OCI-LY7 (cell line): ENCODE measurements at regions of chr11 and their contacts with region 1.

Region 1: GRCh38 chr11:64355078-64355940 is 3.7 kb upstream of the RPS6KA4 start:
- DNase-seq: peak; percentile 86
- H3K4me3 ChIP-seq: no peak overlapping the region
- H3K27ac ChIP-seq: peak overlapping the region; percentile 29
- H3K4me1 ChIP-seq: peaks cover 44% of the 10 kb centered on the region
- CTCF ChIP-seq: peak; percentile 93

Region 2: GRCh38 chr11:64251016-64251752 is 104.1 kb before region 1 on chr11 and contains the start of gene PLCB3:
- CTCF ChIA-PET with region 1: no interaction called
- POLR2A ChIA-PET with region 1: no interaction called
- intact Hi-C with region 1: no loop called
- DNase-seq: peak; percentile 70
- H3K4me3 ChIP-seq: peak within 1 kb of the TSS; percentile 76
- H3K27ac ChIP-seq: no peak within 1 kb of the TSS
- H3K4me1 ChIP-seq: peaks cover 55% of the 10 kb centered on the region
- CTCF ChIP-seq: peak; percentile 80
- total RNA-seq, gene PLCB3: 7.6 and 8.6 TPM in 2 replicates

Region 3: DNA sequence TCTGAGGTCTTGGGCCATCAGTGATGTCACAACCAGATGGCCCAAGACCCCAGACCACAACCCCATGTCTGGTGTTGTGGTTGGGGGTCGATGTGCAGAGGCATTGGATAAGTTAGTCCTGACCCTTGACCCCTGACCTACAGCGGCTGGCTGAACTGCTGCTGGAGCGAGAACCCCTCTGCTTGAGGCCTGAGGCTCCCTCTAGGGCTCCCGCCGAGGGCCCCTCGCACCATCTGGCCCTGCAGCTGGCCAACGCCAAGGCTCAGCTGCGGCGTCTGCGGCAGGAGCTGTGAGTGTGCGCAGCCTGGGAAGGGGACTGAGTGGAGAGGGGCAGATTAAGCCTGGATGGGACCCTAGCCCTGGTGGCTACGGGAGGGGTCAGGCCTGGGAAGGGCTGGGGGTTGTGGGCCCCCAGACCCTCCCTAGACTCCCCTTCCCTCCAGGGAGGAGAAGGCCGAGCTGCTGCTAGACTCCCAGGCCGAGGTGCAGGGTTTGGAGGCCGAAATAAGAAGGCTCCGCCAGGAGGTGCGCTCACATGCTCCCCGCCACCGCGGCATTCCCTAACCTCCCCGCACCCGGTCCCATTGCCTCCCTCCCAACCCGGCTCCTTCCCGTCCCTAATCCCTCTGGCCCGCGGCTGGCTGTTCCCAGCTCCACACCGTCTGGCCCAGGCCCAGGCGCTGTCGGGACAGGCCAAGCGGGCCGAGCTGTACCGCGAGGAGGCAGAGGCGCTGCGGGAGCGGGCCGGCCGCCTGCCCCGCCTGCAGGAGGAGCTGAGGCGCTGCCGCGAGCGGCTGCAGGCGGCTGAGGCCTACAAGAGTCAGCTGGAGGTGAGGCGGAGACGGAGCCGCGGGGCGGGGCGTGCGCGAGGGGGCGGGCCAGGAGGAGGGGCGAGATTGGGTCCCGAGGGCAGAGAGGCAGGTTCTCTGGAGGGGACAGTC is 13.2 kb before region 1 on chr11:
- CTCF ChIA-PET with region 1: interaction called, 3 read pairs
- POLR2A ChIA-PET with region 1: interaction called, 5 read pairs
- intact Hi-C with region 1: loop called (anchors 1 kb)
- DNase-seq: peak; percentile 91
- H3K4me3 ChIP-seq: peak overlapping the region; percentile 50
- H3K27ac ChIP-seq: no peak overlapping the region
- H3K4me1 ChIP-seq: peaks cover 40% of the 10 kb centered on the region
- CTCF ChIP-seq: peak; percentile 65

Region 4: GRCh38 chr11:64448599-64449556 is 93.6 kb after region 1 on chr11:
- CTCF ChIA-PET with region 1: no interaction called
- POLR2A ChIA-PET with region 1: no interaction called
- intact Hi-C with region 1: no loop called
- DNase-seq: peak; percentile 79
- H3K4me3 ChIP-seq: peak overlapping the region; percentile 56
- H3K27ac ChIP-seq: peak overlapping the region; percentile 56
- H3K4me1 ChIP-seq: peaks cover 22% of the 10 kb centered on the region
- CTCF ChIP-seq: peak; percentile 89

Region 5: DNA sequence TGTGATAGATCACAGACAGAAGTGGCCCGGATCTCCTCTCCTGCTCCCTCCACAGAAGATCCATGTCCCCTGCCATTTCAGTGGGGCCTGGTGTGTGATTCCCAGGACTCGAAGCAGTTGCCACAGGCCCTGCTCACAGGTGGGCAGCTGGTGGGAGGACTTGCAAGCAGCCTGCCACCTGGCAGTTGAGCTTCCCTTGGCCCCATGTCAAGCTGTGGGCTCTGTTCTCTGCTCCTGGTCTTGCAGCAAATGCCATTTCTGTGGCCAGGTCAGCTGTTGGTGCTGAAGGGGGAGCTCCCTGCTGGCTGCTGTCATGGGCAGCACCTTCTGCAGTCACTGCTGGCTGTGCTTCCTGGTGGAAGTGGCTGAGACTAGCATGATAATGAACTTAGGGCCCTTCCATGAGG is 176.6 kb after region 1 on chr11:
- CTCF ChIA-PET with region 1: no interaction called
- POLR2A ChIA-PET with region 1: no interaction called
- intact Hi-C with region 1: no loop called
- DNase-seq: no peak
- H3K4me3 ChIP-seq: no peak overlapping the region
- H3K27ac ChIP-seq: no peak overlapping the region
- H3K4me1 ChIP-seq: peaks cover 6% of the 10 kb centered on the region
- CTCF ChIP-seq: no peak